HepG2 (cell line): ENCODE measurements at regions of chr19 and their contacts with region 1.

Region 1: GRCh38 chr19:55461259-55461973 is at the start of gene ISOC2:
- DNase-seq: peak; percentile 98
- ATAC-seq: peak; percentile 93
- H3K4me3 ChIP-seq: peak within 1 kb of the TSS; percentile 60 to 81 (median 67)
- H3K27ac ChIP-seq: peak within 1 kb of the TSS; percentile 93
- H3K4me1 ChIP-seq: peaks cover 58% of the 10 kb centered on the region
- H3K27me3 ChIP-seq: no peaks in the 10 kb centered on the region
- CTCF ChIP-seq: no peak
- EP300 ChIP-seq: no peak
- POLR2A ChIP-seq: peak; percentile 92 to 97
- RAD21 ChIP-seq: peak; percentile 68
- total RNA-seq, gene ISOC2: 105 and 106 TPM in 2 replicates

Region 2: DNA sequence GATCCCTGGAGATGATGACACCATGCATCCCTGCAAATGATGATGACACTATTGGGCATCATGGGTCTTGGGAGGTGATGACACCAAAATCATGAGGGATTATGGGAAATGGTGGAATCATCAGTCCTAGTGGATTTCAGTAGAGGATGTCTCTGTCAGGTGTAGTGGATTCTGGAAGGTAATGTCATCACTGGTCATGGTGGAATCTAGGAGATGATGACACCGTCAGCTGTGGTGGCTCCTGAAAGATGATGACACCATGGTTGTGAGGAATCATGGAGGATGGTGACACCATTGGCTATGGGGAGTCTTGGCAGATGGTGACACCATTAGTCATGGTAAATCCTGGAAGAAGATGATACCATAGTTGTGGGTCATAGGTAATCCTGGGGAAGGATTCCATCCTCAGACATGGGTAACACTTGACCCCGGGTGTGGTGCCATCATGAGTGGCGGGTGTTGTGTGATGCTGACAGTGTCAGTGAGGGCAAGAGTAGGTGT is 30.2 kb before region 1 on chr19:
- CTCF ChIA-PET with region 1: no interaction called
- POLR2A ChIA-PET with region 1: no interaction called
- in situ Hi-C with region 1: no loop called
- intact Hi-C with region 1: no loop called
- DNase-seq: no peak
- ATAC-seq: no peak
- H3K4me3 ChIP-seq: no peak overlapping the region
- H3K27ac ChIP-seq: no peak overlapping the region
- H3K4me1 ChIP-seq: no peaks in the 10 kb centered on the region
- H3K27me3 ChIP-seq: peaks cover 2 to 3% of the 10 kb centered on the region in 2 experiments; a peak in 1 of 5 replicates
- CTCF ChIP-seq: no peak
- EP300 ChIP-seq: no peak
- POLR2A ChIP-seq: no peak
- RAD21 ChIP-seq: no peak

Region 3: DNA sequence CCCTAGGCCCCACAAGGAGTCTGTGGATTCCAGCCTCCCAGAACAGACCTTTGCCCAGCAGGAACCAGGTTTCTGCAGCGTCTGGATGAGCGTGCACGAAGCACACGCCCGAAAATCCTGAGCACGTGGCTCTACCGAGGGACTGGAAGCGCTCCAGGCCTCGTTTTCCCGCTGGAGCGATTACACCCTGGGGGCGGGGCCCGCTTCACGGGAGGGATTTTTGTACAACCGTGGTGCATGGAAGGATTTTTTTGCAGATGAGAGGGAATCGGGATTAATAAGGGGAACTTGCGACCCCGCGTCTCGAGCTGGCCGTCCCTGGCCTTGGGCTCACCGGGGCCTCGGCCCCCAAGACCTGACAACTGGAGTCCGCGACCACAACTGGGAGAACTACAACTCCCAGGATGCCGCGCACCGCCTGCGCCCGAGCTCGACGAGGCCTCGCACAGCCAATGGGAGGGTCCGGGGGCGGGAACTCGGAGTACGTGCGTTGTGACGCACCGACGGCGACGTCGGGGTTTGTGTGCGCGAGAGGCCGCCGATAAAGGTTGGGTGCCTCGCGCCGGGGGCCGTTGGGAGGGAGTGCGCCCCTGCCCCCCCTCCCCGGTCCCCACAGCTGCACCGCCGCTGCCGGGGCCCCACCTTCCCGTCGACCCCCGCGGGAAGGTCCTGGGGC is 14.8 kb after region 1 on chr19 and contains the start of gene ZNF628:
- CTCF ChIA-PET with region 1: no interaction called
- POLR2A ChIA-PET with region 1: interaction called, 29 read pairs
- in situ Hi-C with region 1: no loop called
- intact Hi-C with region 1: no loop called
- DNase-seq: peak; percentile 93
- ATAC-seq: peak; percentile 93
- H3K4me3 ChIP-seq: peak within 1 kb of the TSS; percentile 81 to 97 (median 86)
- H3K27ac ChIP-seq: peak within 1 kb of the TSS; percentile 77
- H3K4me1 ChIP-seq: peaks cover 53% of the 10 kb centered on the region
- H3K27me3 ChIP-seq: no peaks in the 10 kb centered on the region; a peak in 1 of 5 replicates
- CTCF ChIP-seq: no peak
- EP300 ChIP-seq: no peak
- POLR2A ChIP-seq: peak in 1 of 2 experiments; percentile 37; a peak in 1 of 4 replicates
- RAD21 ChIP-seq: no peak; the same call in 1 of the 2 replicates
- total RNA-seq, gene ZNF628: 1.00 and 1.2 TPM in 2 replicates

Region 4: GRCh38 chr19:55536951-55537740 is 75.7 kb after region 1 on chr19 and contains the start of gene SBK2:
- CTCF ChIA-PET with region 1: no interaction called
- POLR2A ChIA-PET with region 1: no interaction called
- in situ Hi-C with region 1: no loop called
- intact Hi-C with region 1: no loop called
- DNase-seq: peak; percentile 33
- ATAC-seq: peak; percentile 57
- H3K4me3 ChIP-seq: peak within 1 kb of the TSS in 2 of 3 experiments; percentile 13 to 64; a peak in 2 of 6 replicates
- H3K27ac ChIP-seq: no peak within 1 kb of the TSS
- H3K4me1 ChIP-seq: peaks cover 32% of the 10 kb centered on the region
- H3K27me3 ChIP-seq: no peaks in the 10 kb centered on the region; a peak in 1 of 5 replicates
- CTCF ChIP-seq: peak; percentile 70
- EP300 ChIP-seq: no peak
- POLR2A ChIP-seq: no peak
- RAD21 ChIP-seq: 0 out of 2 replicates have a peak, but pooled peaks have one; percentile 30
- total RNA-seq, gene SBK2: 0.24 and 0.45 TPM in 2 replicates

Region 5: GRCh38 chr19:55624109-55625003 is 162.9 kb after region 1 on chr19 and contains the start of gene ZNF784:
- CTCF ChIA-PET with region 1: no interaction called
- POLR2A ChIA-PET with region 1: interaction called, 11 read pairs
- in situ Hi-C with region 1: no loop called
- intact Hi-C with region 1: no loop called
- DNase-seq: peak; percentile 82
- ATAC-seq: peak; percentile 70
- H3K4me3 ChIP-seq: peak within 1 kb of the TSS; percentile 65 to 82 (median 70)
- H3K27ac ChIP-seq: peak within 1 kb of the TSS; percentile 98
- H3K4me1 ChIP-seq: peaks cover 27% of the 10 kb centered on the region
- H3K27me3 ChIP-seq: no peaks in the 10 kb centered on the region
- CTCF ChIP-seq: peak; percentile 22; the same call in 1 of the 2 replicates
- EP300 ChIP-seq: no peak
- POLR2A ChIP-seq: peak; percentile 74 to 88
- RAD21 ChIP-seq: no peak
- total RNA-seq, gene ZNF784: 4.0 and 4.2 TPM in 2 replicates